MCF 10A (cell line): ENCODE measurements at regions of chrX and their contacts with region 1.

Region 1: GRCh38 chrX:132292793-132293192 is 73.5 kb upstream of the RAP2C start:
- DNase-seq: peak; percentile 67
- H3K4me3 Mint-ChIP-seq: no peak overlapping the region
- H3K27ac Mint-ChIP-seq: no peak overlapping the region
- H3K4me1 Mint-ChIP-seq: no peaks in the 10 kb centered on the region
- H3K27me3 Mint-ChIP-seq: peaks cover 27% of the 10 kb centered on the region
- CTCF ChIP-seq: peak; percentile 45

Region 2: GRCh38 chrX:132231587-132231986 is 61.2 kb before region 1 on chrX:
- CTCF ChIA-PET with region 1: interaction called, 14 read pairs
- POLR2A ChIA-PET with region 1: no interaction called
- intact Hi-C with region 1: loop called (anchors 2 kb)
- DNase-seq: no peak
- H3K4me3 Mint-ChIP-seq: no peak overlapping the region
- H3K27ac Mint-ChIP-seq: no peak overlapping the region
- H3K4me1 Mint-ChIP-seq: peaks cover 10% of the 10 kb centered on the region
- H3K27me3 Mint-ChIP-seq: peaks cover 77% of the 10 kb centered on the region
- CTCF ChIP-seq: no peak

Region 3: GRCh38 chrX:132304599-132304998 is 11.8 kb after region 1 on chrX:
- CTCF ChIA-PET with region 1: interaction called, 18 read pairs
- POLR2A ChIA-PET with region 1: no interaction called
- intact Hi-C with region 1: no loop called
- DNase-seq: no peak
- H3K4me3 Mint-ChIP-seq: no peak overlapping the region
- H3K27ac Mint-ChIP-seq: no peak overlapping the region
- H3K4me1 Mint-ChIP-seq: no peaks in the 10 kb centered on the region
- H3K27me3 Mint-ChIP-seq: peaks cover 53% of the 10 kb centered on the region
- CTCF ChIP-seq: no peak

Region 4: DNA sequence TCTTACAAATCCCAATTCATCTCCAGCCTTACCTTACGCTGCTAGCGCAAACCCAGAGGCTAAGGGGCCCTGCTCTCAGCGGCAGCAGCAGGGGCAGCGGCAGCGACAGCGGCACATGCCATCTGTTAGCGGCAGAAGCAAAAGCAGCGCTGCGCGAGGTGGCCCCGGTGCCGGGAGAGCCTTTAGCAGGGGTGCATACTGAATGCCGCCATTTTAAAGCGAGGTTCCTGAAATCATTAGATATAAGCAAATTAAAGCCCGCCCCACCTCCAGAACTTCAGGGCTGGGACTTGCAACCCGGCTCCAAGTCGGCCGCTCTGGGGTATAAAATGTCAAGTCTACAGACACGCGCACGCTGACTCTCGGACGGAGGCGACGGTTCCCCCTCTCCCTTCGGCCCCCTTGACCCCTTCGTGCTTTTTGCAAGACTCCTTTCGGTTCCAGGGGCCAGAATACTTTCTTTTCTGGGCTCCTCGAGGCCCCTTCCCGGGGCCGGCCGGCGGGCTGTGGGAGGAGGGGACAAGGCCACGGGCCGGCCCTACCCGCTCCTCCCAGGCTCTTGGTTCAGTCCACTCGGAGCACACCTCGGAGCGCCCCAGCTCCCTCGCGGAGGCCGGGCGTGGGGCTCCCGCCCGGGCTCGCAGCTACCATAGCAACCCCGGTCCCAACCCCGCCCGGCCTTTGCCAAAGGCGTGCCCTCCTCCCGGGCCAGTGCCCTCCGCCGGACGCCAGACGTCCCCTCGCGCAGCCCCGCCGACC is 196.2 kb after region 1 on chrX and contains the start of gene MBNL3:
- CTCF ChIA-PET with region 1: interaction called, 9 read pairs
- POLR2A ChIA-PET with region 1: interaction called, 12 read pairs
- intact Hi-C with region 1: loop called (anchors 5 kb)
- DNase-seq: peak; percentile 76
- H3K4me3 Mint-ChIP-seq: peak within 1 kb of the TSS; percentile 83
- H3K27ac Mint-ChIP-seq: peak within 1 kb of the TSS; percentile 79
- H3K4me1 Mint-ChIP-seq: peaks cover 13% of the 10 kb centered on the region
- H3K27me3 Mint-ChIP-seq: peaks cover 31% of the 10 kb centered on the region
- CTCF ChIP-seq: no peak
- total RNA-seq, gene MBNL3: 14.0 and 17.7 TPM in 2 replicates

Region 5: DNA sequence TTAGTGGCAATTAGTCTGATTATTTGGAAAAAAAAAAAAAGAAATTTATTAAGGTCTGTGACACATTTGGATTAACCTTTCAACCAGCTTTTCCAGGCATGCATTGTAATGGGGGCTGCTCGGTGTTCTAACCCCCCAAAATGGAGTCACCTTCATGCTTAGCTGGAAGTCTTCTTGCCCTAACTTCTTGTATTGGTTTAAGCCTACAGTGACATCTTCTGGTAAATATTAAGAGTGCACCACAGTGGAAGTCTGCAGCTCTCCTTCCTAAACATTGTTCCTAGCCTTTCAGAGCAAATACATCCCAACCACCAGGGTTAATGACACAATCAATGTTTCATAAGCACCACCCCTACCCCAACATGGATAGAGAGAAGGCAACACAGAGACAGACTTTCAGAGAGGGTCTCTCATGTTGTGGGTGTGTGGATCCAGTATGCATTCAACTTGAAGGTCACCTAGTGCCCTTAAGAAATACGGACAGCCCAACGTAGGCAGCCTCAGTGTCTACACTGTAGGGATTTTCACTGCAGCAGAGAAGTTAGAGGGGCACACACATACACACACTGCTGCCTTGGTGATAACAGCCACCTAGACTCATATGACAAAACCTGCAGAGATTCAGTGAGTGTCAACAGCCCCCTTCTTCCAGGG is 338.9 kb after region 1 on chrX:
- CTCF ChIA-PET with region 1: interaction called, 13 read pairs
- POLR2A ChIA-PET with region 1: no interaction called
- intact Hi-C with region 1: loop called (anchors 1 kb)
- DNase-seq: peak; percentile 33
- H3K4me3 Mint-ChIP-seq: no peak overlapping the region
- H3K27ac Mint-ChIP-seq: no peak overlapping the region
- H3K4me1 Mint-ChIP-seq: no peaks in the 10 kb centered on the region
- H3K27me3 Mint-ChIP-seq: peaks cover 63% of the 10 kb centered on the region
- CTCF ChIP-seq: peak; percentile 38